T-cell (primary cell): ENCODE measurements at regions of chr1 and their contacts with region 1.

Region 1: DNA sequence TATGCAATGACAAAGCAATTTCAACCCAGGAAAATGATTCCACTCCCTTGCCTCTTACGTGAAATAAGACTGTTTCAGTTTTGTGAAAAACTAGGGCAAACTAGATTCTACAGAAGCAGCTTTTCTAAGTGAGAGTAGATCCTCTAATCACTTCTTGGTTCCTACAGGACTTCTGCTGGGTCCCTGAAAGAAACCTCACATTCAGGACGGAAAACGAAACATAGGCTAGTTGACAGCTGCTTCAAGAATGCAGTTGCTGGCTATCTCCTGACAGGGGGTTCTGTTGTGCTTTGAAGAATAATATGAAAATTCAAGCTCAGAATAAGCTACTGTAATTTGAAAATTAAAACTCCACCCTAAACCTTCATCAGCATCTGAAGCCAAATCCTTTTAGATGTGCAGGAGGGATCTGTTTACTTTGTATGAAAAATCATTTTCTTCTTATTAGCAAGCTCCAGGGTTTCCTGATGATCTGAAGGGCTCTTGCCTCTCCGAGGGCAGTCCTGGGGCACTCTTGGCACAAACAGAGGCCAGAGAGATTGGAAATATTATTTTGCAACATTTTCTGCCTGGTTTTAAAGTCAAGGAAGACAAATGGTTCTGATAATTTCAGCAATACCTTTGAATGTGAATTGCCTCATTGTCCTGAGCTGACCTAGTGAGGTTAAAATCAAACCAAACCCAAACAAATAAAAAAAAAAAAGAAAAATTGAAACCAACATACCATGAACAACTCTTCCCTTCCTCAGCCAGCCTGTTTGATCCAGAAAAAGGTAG is 55.0 kb downstream of the NTMT2 start:
- DNase-seq: no peak
- ATAC-seq: no peak
- H3K4me3 ChIP-seq: no peak overlapping the region
- H3K4me3 Mint-ChIP-seq: no peak overlapping the region
- H3K27ac ChIP-seq: no peak overlapping the region
- H3K27ac Mint-ChIP-seq: no peak overlapping the region
- H3K4me1 ChIP-seq: no peaks in the 10 kb centered on the region
- H3K4me1 Mint-ChIP-seq: no peaks in the 10 kb centered on the region
- H3K27me3 ChIP-seq: peaks cover 0 to 3% of the 10 kb centered on the region in 2 experiments
- H3K27me3 Mint-ChIP-seq: peaks cover 19 to 30% of the 10 kb centered on the region in 2 donors

Region 2: DNA sequence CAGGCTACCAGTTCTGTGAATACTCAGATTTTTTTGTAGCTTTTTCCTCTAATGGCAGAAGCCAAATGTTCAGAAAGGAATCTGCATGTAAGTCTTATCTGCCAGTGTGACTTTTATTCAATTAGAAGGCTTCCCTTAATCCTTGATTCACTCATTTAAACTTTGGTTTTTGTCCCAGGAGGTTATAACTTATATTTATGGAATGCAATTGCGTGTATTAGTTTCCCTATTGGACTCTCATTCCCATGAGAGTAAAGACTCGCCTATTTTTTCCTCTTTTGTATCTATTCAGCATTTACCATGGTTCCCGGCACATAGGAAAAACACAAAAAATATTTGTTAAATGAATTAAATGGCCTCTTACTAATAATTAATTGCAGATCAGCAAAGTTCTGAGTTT is 51.6 kb before region 1 on chr1:
- CTCF ChIA-PET with region 1: no interaction called
- POLR2A ChIA-PET with region 1: no interaction called
- DNase-seq: no peak
- ATAC-seq: no peak
- H3K4me3 ChIP-seq: no peak overlapping the region
- H3K4me3 Mint-ChIP-seq: no peak overlapping the region
- H3K27ac ChIP-seq: no peak overlapping the region
- H3K27ac Mint-ChIP-seq: no peak overlapping the region
- H3K4me1 ChIP-seq: peaks cover 0 to 2% of the 10 kb centered on the region in 2 experiments
- H3K4me1 Mint-ChIP-seq: peaks cover 8 to 15% (median 15%) of the 10 kb centered on the region in 3 donors
- H3K27me3 ChIP-seq: peaks cover 0 to 4% of the 10 kb centered on the region in 2 experiments
- H3K27me3 Mint-ChIP-seq: peaks cover 16 to 17% of the 10 kb centered on the region in 2 donors

Region 3: DNA sequence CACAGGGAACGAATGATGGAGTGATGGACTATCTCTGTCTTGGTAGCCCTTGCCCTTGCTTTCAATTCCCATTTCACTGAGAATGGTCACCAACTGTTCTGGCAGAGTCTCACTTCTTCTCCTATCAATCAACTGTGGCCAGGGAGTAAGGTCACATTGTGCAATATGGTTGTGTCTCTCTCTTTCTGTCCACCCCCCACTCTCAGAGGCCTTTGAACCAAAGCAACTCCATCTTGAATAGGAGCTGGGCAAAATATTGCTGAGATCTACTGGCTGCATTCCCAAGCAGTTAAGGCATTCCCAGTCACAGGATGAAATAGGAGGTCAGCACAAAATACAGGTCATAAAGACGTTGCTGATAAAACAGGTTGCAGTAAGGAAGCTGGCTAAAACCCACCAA is 18.4 kb before region 1 on chr1:
- CTCF ChIA-PET with region 1: no interaction called
- POLR2A ChIA-PET with region 1: no interaction called
- DNase-seq: no peak
- ATAC-seq: no peak
- H3K4me3 ChIP-seq: no peak overlapping the region
- H3K4me3 Mint-ChIP-seq: no peak overlapping the region
- H3K27ac ChIP-seq: no peak overlapping the region
- H3K27ac Mint-ChIP-seq: no peak overlapping the region
- H3K4me1 ChIP-seq: no peaks in the 10 kb centered on the region
- H3K4me1 Mint-ChIP-seq: no peaks in the 10 kb centered on the region
- H3K27me3 ChIP-seq: no peaks in the 10 kb centered on the region
- H3K27me3 Mint-ChIP-seq: peaks cover 0 to 5% of the 10 kb centered on the region in 2 donors

Region 4: DNA sequence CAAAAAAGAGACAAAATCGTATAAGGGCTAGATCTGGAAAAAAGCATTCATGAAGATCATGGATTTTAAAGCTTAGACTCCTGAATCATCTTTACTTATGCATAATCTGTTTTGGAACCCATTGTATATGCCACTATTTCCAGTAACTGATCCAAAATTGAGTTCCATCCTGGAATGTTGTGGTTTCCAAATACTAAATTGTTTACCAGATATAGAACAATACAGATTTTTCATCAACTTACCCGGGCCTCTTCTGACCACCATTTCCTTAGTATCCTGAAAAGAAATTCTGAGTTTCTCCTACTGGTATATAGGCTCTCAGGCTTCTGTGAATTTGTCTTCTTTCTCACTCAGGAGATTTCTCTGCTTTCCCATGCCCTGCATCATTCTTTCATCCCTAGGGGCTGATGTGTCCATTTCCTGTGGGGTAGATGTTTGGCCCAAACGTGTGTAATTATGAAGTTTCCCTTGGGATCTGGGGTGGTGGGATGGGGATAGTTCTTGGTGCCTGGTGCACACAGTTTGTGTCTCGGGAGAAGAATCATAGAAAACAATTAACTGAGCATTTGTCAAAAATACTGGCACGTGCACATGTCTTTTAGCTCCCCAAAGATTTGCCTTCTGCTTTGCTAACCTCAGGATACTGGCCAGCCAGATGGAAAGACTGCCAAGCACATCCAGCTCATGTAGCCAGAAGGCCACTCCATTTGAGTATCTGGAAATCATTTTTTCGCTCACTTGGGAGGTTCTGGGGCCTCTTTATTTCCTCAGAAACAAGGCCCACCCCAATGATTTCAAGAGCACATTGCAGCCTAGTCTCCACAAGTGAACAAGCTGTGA is 72.7 kb after region 1 on chr1:
- CTCF ChIA-PET with region 1: no interaction called
- POLR2A ChIA-PET with region 1: no interaction called
- DNase-seq: no peak
- ATAC-seq: no peak
- H3K4me3 ChIP-seq: no peak overlapping the region
- H3K4me3 Mint-ChIP-seq: no peak overlapping the region
- H3K27ac ChIP-seq: no peak overlapping the region
- H3K27ac Mint-ChIP-seq: no peak overlapping the region
- H3K4me1 ChIP-seq: no peaks in the 10 kb centered on the region
- H3K4me1 Mint-ChIP-seq: no peaks in the 10 kb centered on the region
- H3K27me3 ChIP-seq: no peaks in the 10 kb centered on the region
- H3K27me3 Mint-ChIP-seq: peaks cover 21 to 27% of the 10 kb centered on the region in 2 donors

Region 5: GRCh38 chr1:170284951-170285350 is 84.1 kb after region 1 on chr1:
- CTCF ChIA-PET with region 1: no interaction called
- POLR2A ChIA-PET with region 1: no interaction called
- DNase-seq: no peak
- ATAC-seq: no peak
- H3K4me3 ChIP-seq: no peak overlapping the region
- H3K4me3 Mint-ChIP-seq: no peak overlapping the region
- H3K27ac ChIP-seq: no peak overlapping the region
- H3K27ac Mint-ChIP-seq: no peak overlapping the region
- H3K4me1 ChIP-seq: no peaks in the 10 kb centered on the region
- H3K4me1 Mint-ChIP-seq: no peaks in the 10 kb centered on the region
- H3K27me3 ChIP-seq: no peaks in the 10 kb centered on the region
- H3K27me3 Mint-ChIP-seq: peaks cover 0 to 14% of the 10 kb centered on the region in 2 donors

Region 6: DNA sequence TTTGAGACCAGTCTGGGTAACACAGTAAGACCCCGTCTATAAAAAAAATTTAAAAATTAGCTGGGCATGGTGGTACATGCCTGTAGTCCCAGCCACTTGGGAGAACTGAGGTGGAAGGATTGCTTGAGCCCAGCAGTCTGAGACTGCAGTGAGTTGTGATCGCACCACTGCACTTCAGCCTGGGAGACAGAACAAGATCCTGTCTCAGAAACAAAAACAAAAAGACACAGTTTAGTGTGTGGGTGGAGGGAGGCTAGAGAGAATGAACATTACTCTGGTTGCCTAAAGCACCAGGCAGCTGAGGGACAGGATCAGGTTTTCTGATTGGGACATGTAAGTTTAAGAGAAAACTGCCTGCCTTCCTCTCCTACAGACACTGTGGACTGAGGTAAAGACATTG is 1498.7 kb after region 1 on chr1:
- CTCF ChIA-PET with region 1: no interaction called
- POLR2A ChIA-PET with region 1: interaction called in 1 of 2 experiments, 16 read pairs
- DNase-seq: no peak
- ATAC-seq: no peak
- H3K4me3 ChIP-seq: no peak overlapping the region
- H3K4me3 Mint-ChIP-seq: no peak overlapping the region
- H3K27ac ChIP-seq: no peak overlapping the region
- H3K27ac Mint-ChIP-seq: no peak overlapping the region
- H3K4me1 ChIP-seq: no peaks in the 10 kb centered on the region
- H3K4me1 Mint-ChIP-seq: no peaks in the 10 kb centered on the region
- H3K27me3 ChIP-seq: no peaks in the 10 kb centered on the region
- H3K27me3 Mint-ChIP-seq: no peaks in the 10 kb centered on the region